Calu3 (cell line): ENCODE measurements at regions of chr21 and their contacts with region 1.

Region 1: DNA sequence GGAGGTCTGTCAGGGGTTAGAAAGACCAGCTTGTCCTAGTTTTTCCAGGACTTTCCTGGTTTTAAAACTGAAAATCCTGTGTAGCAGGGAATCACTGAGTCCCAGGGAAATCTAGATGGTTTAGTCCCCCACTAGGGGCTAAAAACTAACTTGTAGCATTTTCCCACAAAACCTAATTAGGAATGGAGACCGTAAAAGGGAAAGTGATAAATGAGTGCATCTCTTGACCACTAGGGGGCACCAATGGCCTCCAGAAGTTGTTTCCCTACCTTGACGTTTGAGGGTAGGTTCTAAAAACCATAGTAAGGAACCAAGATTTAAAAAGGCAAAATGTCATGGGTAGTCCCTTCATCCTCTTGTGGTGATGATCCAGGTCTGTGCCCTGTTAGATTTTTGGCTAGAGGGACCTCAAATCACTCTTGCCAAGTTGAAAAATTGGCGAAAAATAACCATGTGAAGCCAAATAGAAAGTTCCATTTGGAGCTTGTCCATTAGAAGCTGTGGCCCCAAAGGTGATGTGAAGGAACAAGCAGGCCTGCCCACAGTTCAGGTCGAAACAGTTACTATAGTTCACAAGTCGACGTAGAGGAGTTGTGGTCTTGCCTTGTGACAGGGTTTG is 24.5 kb downstream of the CLIC6 start:
- DNase-seq: peak; percentile 49
- H3K4me3 Mint-ChIP-seq: no peak overlapping the region
- H3K27ac Mint-ChIP-seq: no peak overlapping the region
- H3K4me1 Mint-ChIP-seq: peaks cover 19% of the 10 kb centered on the region
- H3K27me3 Mint-ChIP-seq: no peaks in the 10 kb centered on the region
- CTCF ChIP-seq: peak; percentile 45

Region 2: GRCh38 chr21:34614633-34615486 is 78.4 kb before region 1 on chr21 and contains the start of gene RCAN1:
- CTCF ChIA-PET with region 1: no interaction called
- intact Hi-C with region 1: no loop called
- DNase-seq: peak; percentile 80
- H3K4me3 Mint-ChIP-seq: peak within 1 kb of the TSS; percentile 75
- H3K27ac Mint-ChIP-seq: no peak within 1 kb of the TSS
- H3K4me1 Mint-ChIP-seq: no peaks in the 10 kb centered on the region
- H3K27me3 Mint-ChIP-seq: peaks cover 31% of the 10 kb centered on the region
- CTCF ChIP-seq: no peak
- total RNA-seq, gene RCAN1: 25.4 and 25.7 TPM in 2 replicates

Region 3: GRCh38 chr21:34745557-34746255 is 52.4 kb after region 1 on chr21:
- CTCF ChIA-PET with region 1: interaction called, 17 read pairs
- intact Hi-C with region 1: loop called (anchors 5 kb)
- DNase-seq: peak; percentile 70
- H3K4me3 Mint-ChIP-seq: peak overlapping the region; percentile 37
- H3K27ac Mint-ChIP-seq: peak overlapping the region; percentile 58
- H3K4me1 Mint-ChIP-seq: peaks cover 30% of the 10 kb centered on the region
- H3K27me3 Mint-ChIP-seq: no peaks in the 10 kb centered on the region
- CTCF ChIP-seq: peak; percentile 63

Region 4: GRCh38 chr21:34795175-34795547 is 101.9 kb after region 1 on chr21:
- CTCF ChIA-PET with region 1: no interaction called
- intact Hi-C with region 1: loop called (anchors 10 kb)
- DNase-seq: no peak
- H3K4me3 Mint-ChIP-seq: no peak overlapping the region
- H3K27ac Mint-ChIP-seq: peak overlapping the region; percentile 61
- H3K4me1 Mint-ChIP-seq: peaks cover 54% of the 10 kb centered on the region
- H3K27me3 Mint-ChIP-seq: no peaks in the 10 kb centered on the region
- CTCF ChIP-seq: no peak

Region 5: GRCh38 chr21:34845521-34846451 is 152.5 kb after region 1 on chr21:
- CTCF ChIA-PET with region 1: no interaction called
- intact Hi-C with region 1: loop called (anchors 10 kb)
- DNase-seq: peak; percentile 59
- H3K4me3 Mint-ChIP-seq: peak overlapping the region; percentile 27
- H3K27ac Mint-ChIP-seq: peak overlapping the region; percentile 71
- H3K4me1 Mint-ChIP-seq: peaks cover 51% of the 10 kb centered on the region
- H3K27me3 Mint-ChIP-seq: no peaks in the 10 kb centered on the region
- CTCF ChIP-seq: no peak

Region 6: GRCh38 chr21:34881894-34882371 is 188.6 kb after region 1 on chr21:
- CTCF ChIA-PET with region 1: interaction called, 4 read pairs
- intact Hi-C with region 1: loop called (anchors 5 kb)
- DNase-seq: no peak
- H3K4me3 Mint-ChIP-seq: peak overlapping the region; percentile 65
- H3K27ac Mint-ChIP-seq: peak overlapping the region; percentile 86
- H3K4me1 Mint-ChIP-seq: peaks cover 34% of the 10 kb centered on the region
- H3K27me3 Mint-ChIP-seq: no peaks in the 10 kb centered on the region
- CTCF ChIP-seq: no peak

Region 7: DNA sequence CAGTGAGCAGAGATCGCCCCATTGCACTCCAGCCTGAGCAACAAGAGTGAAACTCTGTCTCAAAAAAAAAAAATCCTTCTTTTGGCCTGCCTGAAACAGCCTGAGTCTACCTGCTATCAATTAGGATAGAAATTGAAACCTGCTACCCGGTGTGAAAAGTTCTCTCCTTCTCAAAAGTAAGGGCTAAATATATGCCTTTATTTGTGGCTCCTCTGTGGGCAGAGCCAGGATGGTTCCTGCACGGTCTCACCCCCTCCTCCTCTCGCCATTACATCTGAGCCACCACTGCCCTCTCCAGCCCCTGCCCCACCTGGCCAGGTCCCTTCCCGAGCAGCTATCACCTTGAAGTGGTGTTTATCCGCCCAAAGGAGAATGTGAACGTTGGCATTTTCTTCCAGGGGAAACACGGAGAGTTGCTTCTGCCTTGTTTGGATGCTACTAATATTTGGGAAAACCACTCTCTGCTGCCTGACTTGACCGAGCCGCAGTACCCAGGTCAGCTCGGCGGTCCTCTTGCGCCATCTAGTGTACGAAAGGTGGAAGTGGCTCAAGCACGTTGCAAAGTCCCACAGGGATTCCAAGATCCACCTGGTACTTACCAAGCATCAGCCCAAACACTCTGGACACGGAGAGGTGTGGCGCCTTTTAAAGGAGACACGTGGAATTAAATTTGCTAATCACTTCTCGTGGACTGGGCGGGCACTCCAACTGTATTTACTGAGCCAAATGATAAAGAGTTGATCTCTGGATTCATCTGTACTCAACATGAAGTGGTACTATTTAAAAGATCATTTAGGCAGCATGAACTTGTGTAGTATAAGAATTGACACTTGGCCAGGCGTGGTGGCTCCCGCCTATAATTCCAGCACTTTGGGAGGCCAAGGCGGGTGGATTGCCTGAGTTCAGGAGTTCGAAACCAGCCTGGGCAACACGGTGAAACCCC is 1335.1 kb after region 1 on chr21:
- CTCF ChIA-PET with region 1: no interaction called
- intact Hi-C with region 1: loop called (anchors 5 kb)
- DNase-seq: peak; percentile 65
- H3K4me3 Mint-ChIP-seq: no peak overlapping the region
- H3K27ac Mint-ChIP-seq: no peak overlapping the region
- H3K4me1 Mint-ChIP-seq: no peaks in the 10 kb centered on the region
- H3K27me3 Mint-ChIP-seq: no peaks in the 10 kb centered on the region
- CTCF ChIP-seq: peak; percentile 80